ENCODE measurements at regions of chr3 and their contacts with region 1.

Region 1: DNA sequence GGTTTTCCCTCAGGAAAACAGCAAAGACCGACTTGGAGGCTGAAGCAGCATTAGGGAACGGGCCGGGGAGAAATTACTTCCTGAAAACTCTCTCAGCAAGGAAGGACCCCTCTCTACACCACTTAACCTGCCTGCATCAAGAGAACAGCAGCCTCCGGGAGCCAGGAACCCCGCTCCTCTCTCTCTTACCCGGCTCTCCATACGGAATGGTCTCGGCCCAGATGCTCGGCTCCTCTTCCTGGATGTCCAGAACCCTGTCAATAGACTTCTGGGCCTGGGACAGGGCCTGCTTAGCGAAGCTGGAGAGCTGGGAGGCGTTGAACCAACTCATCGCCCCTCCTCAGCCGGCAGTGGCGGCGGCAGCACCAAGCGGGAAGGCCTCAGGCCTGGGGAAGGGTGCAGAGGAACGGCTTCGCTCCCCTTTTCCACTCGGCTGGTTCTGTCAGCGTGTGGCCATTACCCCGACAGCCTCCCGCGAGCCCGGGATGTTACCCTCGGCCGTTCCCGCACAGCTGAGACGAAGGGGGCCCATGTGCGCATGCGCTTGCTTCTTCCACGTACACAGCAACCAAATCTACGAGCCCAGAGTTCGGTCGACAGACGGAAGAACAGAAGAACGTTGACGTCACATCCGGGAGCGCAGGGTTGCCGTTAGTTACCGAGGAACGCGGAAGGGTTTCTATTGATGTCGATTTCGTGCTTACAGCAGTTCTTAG is at the start of gene TMF1:
- DNase-seq: peak; percentile 97
- H3K4me3 Mint-ChIP-seq: peak within 1 kb of the TSS; percentile 94
- H3K27ac Mint-ChIP-seq: peak within 1 kb of the TSS; percentile 92
- H3K4me1 Mint-ChIP-seq: peaks cover 34% of the 10 kb centered on the region
- H3K27me3 Mint-ChIP-seq: no peaks in the 10 kb centered on the region
- total RNA-seq, gene TMF1: 35.7 and 38.9 TPM in 2 replicates

Region 2: GRCh38 chr3:69013253-69014021 is 38.5 kb before region 1 on chr3 and contains the start of gene EOGT:
- intact Hi-C with region 1: loop called (anchors 5 kb)
- DNase-seq: peak; percentile 77
- H3K4me3 Mint-ChIP-seq: peak within 1 kb of the TSS; percentile 84
- H3K27ac Mint-ChIP-seq: peak within 1 kb of the TSS; percentile 71
- H3K4me1 Mint-ChIP-seq: peaks cover 24% of the 10 kb centered on the region
- H3K27me3 Mint-ChIP-seq: no peaks in the 10 kb centered on the region
- total RNA-seq, gene EOGT: 15.4 and 18.1 TPM in 2 replicates

Region 3: GRCh38 chr3:69033470-69033869 is 18.4 kb before region 1 on chr3:
- intact Hi-C with region 1: loop called (anchors 2 kb)
- DNase-seq: no peak
- H3K4me3 Mint-ChIP-seq: no peak overlapping the region
- H3K27ac Mint-ChIP-seq: peak overlapping the region; percentile 78
- H3K4me1 Mint-ChIP-seq: peaks cover 18% of the 10 kb centered on the region
- H3K27me3 Mint-ChIP-seq: no peaks in the 10 kb centered on the region

Measured in activated T-helper 2 cell treated with anti-CD3 and anti-CD28 coated beads, Interferon-gamma antibody, Interleukin-2, Interleukin-4, amounts not matched to agents 10 μg/mL and 5 μg/mL and 100 μg/mL, durations not matched to agents 14 hours and 24 hours and 36 hours (primary cell).